ENCODE measurements at regions of chr3 and their contacts with region 1.

Region 1: DNA sequence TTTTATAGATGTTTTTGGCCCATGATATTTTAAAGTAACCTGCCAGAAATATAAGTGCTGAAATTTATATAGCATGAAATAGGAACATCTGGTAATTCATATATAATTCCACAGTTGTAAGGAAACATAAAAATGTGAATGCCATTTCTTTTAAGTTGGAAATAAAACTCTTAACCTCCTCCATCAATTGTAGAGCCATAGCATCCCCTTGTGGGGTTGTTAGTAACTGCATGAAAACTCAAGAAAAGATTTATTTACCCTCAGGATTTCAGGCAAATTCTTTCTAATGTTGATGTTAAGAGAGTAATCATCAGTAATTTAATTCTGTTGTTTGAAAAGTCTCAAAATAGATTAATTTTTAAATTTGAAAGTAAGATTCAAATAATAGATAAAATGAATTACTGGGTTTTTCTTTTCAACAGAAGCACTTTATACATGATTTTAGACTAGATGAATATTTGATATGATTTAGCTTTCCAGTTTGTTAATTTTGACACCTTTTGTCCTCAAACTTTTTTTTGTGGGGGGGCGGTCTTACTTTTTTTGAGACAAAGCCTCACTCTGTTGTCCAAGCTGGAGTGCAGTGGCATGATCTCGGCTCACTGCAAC is 74.7 kb downstream of the RASA2 start:
- DNase-seq: peak; percentile 79
- H3K4me3 ChIP-seq: no peak overlapping the region
- H3K27ac ChIP-seq: no peak overlapping the region
- H3K4me1 ChIP-seq: peaks cover 17% of the 10 kb centered on the region
- H3K27me3 ChIP-seq: no peaks in the 10 kb centered on the region
- CTCF ChIP-seq: peak; percentile 94

Region 2: GRCh38 chr3:141311496-141312353 is 249.8 kb before region 1 on chr3:
- CTCF ChIA-PET with region 1: interaction called, 4 read pairs
- POLR2A ChIA-PET with region 1: no interaction called
- intact Hi-C with region 1: loop called (anchors 5 kb)
- DNase-seq: peak; percentile 98
- H3K4me3 ChIP-seq: peak overlapping the region; percentile 65
- H3K27ac ChIP-seq: peak overlapping the region; percentile 65
- H3K4me1 ChIP-seq: no peaks in the 10 kb centered on the region
- H3K27me3 ChIP-seq: no peaks in the 10 kb centered on the region
- CTCF ChIP-seq: peak; percentile 82

Region 3: GRCh38 chr3:141360888-141361598 is 200.5 kb before region 1 on chr3:
- CTCF ChIA-PET with region 1: interaction called, 5 read pairs
- POLR2A ChIA-PET with region 1: interaction called, 6 read pairs
- intact Hi-C with region 1: loop called (anchors 10 kb)
- DNase-seq: peak; percentile 76
- H3K4me3 ChIP-seq: peak overlapping the region; percentile 15
- H3K27ac ChIP-seq: no peak overlapping the region
- H3K4me1 ChIP-seq: no peaks in the 10 kb centered on the region
- H3K27me3 ChIP-seq: no peaks in the 10 kb centered on the region
- CTCF ChIP-seq: peak; percentile 83

Region 4: DNA sequence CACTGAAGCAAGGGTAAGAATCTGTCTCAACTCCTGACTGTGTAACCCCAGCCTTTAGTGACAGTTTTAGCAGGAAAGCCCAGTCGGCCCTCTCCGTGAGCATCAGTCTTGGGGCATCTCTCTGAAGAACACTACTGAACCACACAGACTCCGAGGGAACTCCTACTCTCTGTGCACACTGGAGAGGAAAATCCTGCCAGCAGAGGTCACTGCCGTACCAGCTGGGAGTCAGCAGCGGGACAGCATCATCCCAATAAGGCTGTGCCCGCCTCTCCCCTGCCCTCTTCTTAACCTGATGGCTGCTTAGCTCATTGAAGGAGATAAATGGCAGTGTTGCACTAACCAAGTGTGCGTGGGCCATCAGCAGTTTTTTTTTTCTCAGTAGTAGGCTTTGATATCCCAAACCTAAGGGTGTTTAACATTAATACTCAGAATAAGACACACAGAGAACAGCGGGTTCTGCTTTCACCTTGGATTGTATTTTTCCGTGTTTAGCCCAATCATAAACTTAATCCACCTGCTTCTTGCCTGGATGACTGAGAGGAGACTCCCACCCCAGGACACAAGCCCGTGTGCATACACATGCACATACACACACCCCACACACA is 101.3 kb before region 1 on chr3:
- CTCF ChIA-PET with region 1: interaction called, 19 read pairs
- POLR2A ChIA-PET with region 1: no interaction called
- intact Hi-C with region 1: loop called (anchors 1 kb)
- DNase-seq: peak; percentile 89
- H3K4me3 ChIP-seq: no peak overlapping the region
- H3K27ac ChIP-seq: no peak overlapping the region
- H3K4me1 ChIP-seq: no peaks in the 10 kb centered on the region
- H3K27me3 ChIP-seq: no peaks in the 10 kb centered on the region
- CTCF ChIP-seq: peak; percentile 85

Region 5: DNA sequence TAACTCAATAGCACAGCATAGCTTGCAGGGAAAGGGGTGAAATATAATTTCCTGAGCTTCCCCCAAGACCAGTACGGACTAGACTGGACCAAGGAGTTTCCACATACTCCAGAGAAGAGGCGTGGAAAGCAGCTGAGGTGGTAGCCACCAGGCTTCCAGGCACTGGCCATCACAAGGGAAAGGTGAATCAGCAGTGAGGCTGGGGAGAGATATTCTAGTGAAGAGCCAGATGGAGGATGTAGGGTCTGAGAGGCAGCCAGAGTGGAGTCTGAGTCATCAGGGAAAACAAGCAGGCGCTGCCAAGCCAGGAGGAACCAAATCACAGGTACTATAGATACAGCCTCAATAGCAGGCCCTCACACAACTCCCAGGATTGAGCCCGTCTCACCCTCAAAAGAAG is 84.3 kb before region 1 on chr3:
- CTCF ChIA-PET with region 1: interaction called, 3 read pairs
- POLR2A ChIA-PET with region 1: no interaction called
- intact Hi-C with region 1: loop called (anchors 1 kb)
- DNase-seq: no peak
- H3K4me3 ChIP-seq: no peak overlapping the region
- H3K27ac ChIP-seq: no peak overlapping the region
- H3K4me1 ChIP-seq: no peaks in the 10 kb centered on the region
- H3K27me3 ChIP-seq: no peaks in the 10 kb centered on the region
- CTCF ChIP-seq: no peak

Measured in A673 (cell line).